ENCODE measurements at regions of chr17 and their contacts with region 1.

Region 1: DNA sequence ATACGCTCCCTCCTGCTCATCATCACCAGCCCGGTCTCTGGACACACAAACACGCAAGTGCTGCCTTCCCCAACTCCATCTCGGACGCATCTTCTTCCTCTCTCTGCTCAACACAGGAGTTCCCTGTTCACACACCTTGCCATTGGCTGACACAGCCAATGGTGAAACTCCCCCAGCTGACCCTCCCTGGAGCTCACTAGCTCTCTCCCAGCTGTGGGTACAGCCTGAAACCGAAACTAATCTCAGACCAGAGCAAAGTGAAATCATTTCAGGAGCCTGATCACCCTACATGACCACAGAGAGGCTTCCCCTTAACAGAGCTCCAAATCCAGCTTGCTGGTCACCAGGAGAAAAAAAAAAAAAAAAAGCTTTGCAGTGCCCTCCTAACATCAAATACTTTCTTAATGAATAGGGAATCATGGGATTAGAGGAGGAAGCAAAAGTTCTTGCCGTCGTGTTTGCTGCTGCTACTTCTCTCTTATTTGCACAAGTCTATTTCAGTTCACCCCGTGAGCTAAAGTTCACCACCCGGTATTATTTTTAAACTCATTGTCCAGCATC is 8.3 kb downstream of the CUEDC1 start:
- DNase-seq: peak in 1 of 2 donors; percentile 74
- H3K4me3 ChIP-seq: peak overlapping the region; percentile 42 to 45
- H3K27ac ChIP-seq: peak overlapping the region; percentile 65 to 98
- H3K4me1 ChIP-seq: peaks cover 8 to 96% (median 56%) of the 10 kb centered on the region in 4 donors
- H3K27me3 ChIP-seq: no peaks in the 10 kb centered on the region
- CTCF ChIP-seq: no peak

Region 2: DNA sequence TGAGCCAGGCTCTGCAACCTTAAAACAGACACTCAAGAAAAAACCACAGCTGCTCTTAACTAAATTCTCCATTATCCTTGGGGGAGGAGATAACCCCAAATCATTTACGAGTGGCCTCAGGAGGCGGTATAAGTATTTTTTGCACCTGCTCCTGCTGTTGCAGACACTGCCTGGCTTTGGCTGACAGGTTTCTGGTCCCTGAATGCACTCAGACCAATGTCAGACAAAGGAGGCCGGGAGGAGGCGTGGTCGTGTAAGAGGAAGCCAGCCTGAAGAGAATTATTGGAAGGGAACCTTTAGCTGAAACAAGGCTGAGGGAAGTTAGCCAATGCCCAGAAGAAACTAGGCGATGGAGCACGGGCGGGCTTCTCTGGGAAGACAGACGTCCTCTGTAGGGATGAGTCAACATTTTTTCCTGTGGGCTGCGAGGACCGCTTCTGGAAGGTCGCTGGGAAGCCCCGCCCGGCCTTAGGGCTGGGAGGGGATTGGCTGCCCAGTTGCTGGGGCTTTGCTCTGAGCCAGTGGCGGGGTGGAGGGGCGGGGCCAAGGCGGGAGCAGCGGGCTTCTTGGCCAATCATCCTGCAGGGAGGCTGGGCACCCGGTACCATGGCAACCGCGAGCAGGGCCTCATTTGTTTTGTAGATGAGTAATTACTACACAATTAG is 284.1 kb before region 1 on chr17:
- intact Hi-C with region 1: no loop called
- DNase-seq: peak; percentile 90 to 96
- H3K4me3 ChIP-seq: peak overlapping the region; percentile 25 to 39
- H3K27ac ChIP-seq: peak overlapping the region; percentile 59 to 64
- H3K4me1 ChIP-seq: peaks cover 0 to 11% (median 7%) of the 10 kb centered on the region in 4 donors
- H3K27me3 ChIP-seq: no peaks in the 10 kb centered on the region
- CTCF ChIP-seq: no peak

Region 3: GRCh38 chr17:57892146-57892828 is 54.6 kb before region 1 on chr17:
- intact Hi-C with region 1: loop called (anchors 5 kb)
- DNase-seq: peak; percentile 89 to 94
- H3K4me3 ChIP-seq: no peak overlapping the region
- H3K27ac ChIP-seq: peak overlapping the region; percentile 87 to 93
- H3K4me1 ChIP-seq: peaks cover 10 to 86% (median 79%) of the 10 kb centered on the region in 4 donors
- H3K27me3 ChIP-seq: no peaks in the 10 kb centered on the region
- CTCF ChIP-seq: peak; percentile 93 to 95

Measured in tibial artery (tissue), 4 donors.